A673 (cell line): ENCODE measurements at regions of chr12 and their contacts with region 1.

Region 1: GRCh38 chr12:32365473-32366064 is 33.8 kb upstream of the FGD4 start:
- DNase-seq: peak; percentile 80
- H3K4me3 ChIP-seq: no peak overlapping the region
- H3K27ac ChIP-seq: no peak overlapping the region
- H3K4me1 ChIP-seq: peaks cover 7% of the 10 kb centered on the region
- H3K27me3 ChIP-seq: no peaks in the 10 kb centered on the region
- CTCF ChIP-seq: peak; percentile 85

Region 2: DNA sequence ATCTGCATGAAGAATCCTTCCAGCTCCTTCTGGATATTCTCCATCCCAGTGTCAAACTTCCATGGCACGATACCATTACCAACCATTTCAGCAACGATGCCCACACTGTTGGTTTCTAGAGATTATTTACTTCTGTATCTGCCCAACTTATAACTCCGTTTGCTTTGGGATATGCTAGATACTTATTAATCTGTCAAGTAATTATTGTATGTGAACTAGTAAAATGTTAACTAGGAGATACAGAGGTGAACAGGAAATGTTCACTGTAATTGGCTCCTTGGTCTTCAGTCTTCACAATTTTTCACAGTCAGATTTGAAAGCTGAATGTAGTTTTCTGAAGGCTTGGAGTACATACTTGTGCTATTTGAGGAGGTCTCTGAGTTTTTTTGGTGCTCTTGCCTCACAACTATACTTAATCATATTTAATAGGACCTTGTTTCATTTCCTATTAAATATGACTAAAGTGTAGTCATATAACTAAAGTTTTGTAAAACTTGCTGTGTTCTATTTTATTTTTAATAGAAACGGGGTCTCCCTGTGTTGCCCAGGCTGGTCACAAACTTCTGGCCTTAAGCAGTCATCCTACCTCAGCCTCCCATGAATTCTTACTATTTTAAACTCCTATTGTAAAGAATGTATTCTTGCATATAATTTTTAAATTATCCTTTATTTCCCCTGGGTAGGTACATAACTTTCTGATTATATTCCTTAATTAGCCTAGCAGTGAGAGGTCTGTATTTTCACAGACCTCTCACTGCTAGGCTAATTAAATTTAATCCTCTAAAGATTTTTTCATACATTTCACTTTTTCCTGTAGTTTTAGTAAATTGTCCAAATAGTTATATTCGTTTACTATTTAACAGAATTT is 113.5 kb after region 1 on chr12:
- CTCF ChIA-PET with region 1: no interaction called
- POLR2A ChIA-PET with region 1: no interaction called
- intact Hi-C with region 1: no loop called
- DNase-seq: no peak
- H3K4me3 ChIP-seq: no peak overlapping the region
- H3K27ac ChIP-seq: no peak overlapping the region
- H3K4me1 ChIP-seq: peaks cover 14% of the 10 kb centered on the region
- H3K27me3 ChIP-seq: no peaks in the 10 kb centered on the region
- CTCF ChIP-seq: no peak

Region 3: DNA sequence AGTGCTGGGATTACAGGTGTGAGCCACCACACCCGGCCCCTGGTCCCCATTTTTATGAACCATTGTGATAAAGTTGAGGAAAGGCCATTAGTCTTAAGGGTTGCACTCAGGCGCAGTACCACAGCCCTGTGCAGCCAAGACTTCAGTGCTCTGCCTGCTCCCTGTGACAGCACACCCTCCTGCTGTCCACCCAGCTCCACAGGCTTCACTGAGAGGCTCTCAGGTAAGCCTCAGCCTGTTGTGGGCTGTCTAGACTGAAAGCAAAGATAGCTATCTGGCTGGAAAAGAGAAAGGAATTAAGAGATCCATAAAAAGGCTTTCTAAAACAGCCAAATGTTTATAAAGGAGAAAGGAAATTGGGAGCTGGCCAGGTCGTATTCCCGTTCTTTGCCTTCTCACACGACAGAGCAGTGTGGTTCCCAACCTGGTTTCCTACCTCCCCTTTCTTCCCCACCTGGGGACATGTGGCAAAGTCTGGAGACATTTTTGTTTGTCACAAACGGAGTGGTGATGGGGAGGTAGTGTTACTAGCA is 294.4 kb after region 1 on chr12:
- CTCF ChIA-PET with region 1: no interaction called
- POLR2A ChIA-PET with region 1: no interaction called
- intact Hi-C with region 1: loop called (anchors 2 kb)
- DNase-seq: no peak
- H3K4me3 ChIP-seq: no peak overlapping the region
- H3K27ac ChIP-seq: no peak overlapping the region
- H3K4me1 ChIP-seq: no peaks in the 10 kb centered on the region
- H3K27me3 ChIP-seq: no peaks in the 10 kb centered on the region
- CTCF ChIP-seq: no peak

Region 4: DNA sequence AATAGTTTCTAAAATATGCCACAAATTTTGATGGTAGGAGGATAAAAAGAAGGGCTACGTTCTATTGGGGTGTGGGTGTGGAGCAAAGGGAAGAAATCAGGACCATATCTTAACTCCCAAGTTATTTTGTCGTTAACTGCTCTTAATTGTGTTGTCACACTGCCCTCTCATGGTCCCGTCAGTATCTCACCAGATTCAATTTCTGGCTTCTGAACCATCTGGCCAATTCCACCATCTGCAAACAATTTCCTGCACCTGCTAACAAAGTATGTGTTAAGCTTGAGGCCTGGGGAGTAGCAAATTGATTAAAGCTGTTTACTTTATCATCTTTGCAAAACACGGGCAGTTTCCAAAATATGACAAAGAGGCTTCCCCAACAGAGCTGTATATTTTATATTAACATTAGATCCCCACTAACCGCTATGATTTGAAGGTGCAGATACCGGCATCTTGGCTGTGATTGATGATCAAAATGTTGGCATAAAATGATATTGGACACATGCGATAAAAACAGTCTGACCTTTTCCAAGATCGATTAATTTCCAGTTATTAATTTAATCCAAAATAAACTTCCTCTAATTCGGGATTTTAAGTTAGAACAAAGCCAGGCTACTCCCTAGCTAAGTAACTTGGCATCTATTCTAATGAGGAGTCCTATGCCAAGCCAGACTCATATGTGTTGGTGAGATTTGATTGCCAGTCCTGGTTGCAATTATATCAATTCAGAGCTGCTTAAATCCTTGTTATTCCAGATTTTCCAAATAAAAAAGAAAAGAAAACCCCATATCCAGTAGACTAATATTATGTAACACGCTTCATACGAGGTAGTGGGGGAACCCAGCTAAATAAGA is 306.6 kb after region 1 on chr12:
- CTCF ChIA-PET with region 1: interaction called, 4 read pairs
- POLR2A ChIA-PET with region 1: no interaction called
- intact Hi-C with region 1: loop called (anchors 1 kb)
- DNase-seq: peak; percentile 93
- H3K4me3 ChIP-seq: no peak overlapping the region
- H3K27ac ChIP-seq: peak overlapping the region; percentile 51
- H3K4me1 ChIP-seq: peaks cover 7% of the 10 kb centered on the region
- H3K27me3 ChIP-seq: no peaks in the 10 kb centered on the region
- CTCF ChIP-seq: peak; percentile 77

Region 5: GRCh38 chr12:32743264-32743663 is 377.7 kb after region 1 on chr12:
- CTCF ChIA-PET with region 1: no interaction called
- POLR2A ChIA-PET with region 1: no interaction called
- intact Hi-C with region 1: loop called (anchors 5 kb)
- DNase-seq: no peak
- H3K4me3 ChIP-seq: no peak overlapping the region
- H3K27ac ChIP-seq: no peak overlapping the region
- H3K4me1 ChIP-seq: no peaks in the 10 kb centered on the region
- H3K27me3 ChIP-seq: no peaks in the 10 kb centered on the region
- CTCF ChIP-seq: no peak